CD8-positive, alpha-beta T cell (primary cell): ENCODE measurements at regions of chr22 and their contacts with region 1.

Region 1: DNA sequence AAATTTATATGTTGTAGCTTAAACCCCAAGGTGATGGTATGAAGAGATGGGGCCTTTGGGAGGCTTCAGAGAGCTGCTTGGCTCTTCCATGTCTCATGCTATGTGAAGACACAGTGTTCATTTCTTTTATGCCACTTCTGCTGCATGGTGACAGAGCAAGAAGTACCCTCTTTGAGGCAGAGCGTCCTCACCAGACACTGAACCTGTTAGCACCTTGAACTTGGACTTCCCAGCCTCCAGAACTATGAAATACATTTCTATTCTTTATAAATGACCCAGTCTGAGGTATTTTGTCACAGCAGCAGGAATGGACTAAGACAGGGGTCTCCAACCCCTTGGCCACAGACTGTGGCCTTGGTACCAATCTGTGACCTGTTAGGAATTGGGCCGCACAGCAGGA is 146.4 kb upstream of the TIMP3 start:
- DNase-seq: no peak
- ATAC-seq: no peak
- H3K4me3 ChIP-seq: no peak overlapping the region
- H3K4me3 Mint-ChIP-seq: no peak overlapping the region
- H3K27ac ChIP-seq: no peak overlapping the region
- H3K27ac Mint-ChIP-seq: no peak overlapping the region
- H3K4me1 ChIP-seq: no peaks in the 10 kb centered on the region
- H3K4me1 Mint-ChIP-seq: no peaks in the 10 kb centered on the region
- H3K27me3 ChIP-seq: no peaks in the 10 kb centered on the region
- H3K27me3 Mint-ChIP-seq: peaks cover 6% of the 10 kb centered on the region
- CTCF ChIP-seq: no peak

Region 2: GRCh38 chr22:32596471-32596870 is 58.6 kb before region 1 on chr22:
- CTCF ChIA-PET with region 1: no interaction called
- POLR2A ChIA-PET with region 1: no interaction called
- intact Hi-C with region 1: no loop called
- DNase-seq: no peak
- ATAC-seq: no peak
- H3K4me3 ChIP-seq: no peak overlapping the region
- H3K4me3 Mint-ChIP-seq: no peak overlapping the region
- H3K27ac ChIP-seq: no peak overlapping the region
- H3K27ac Mint-ChIP-seq: no peak overlapping the region
- H3K4me1 ChIP-seq: no peaks in the 10 kb centered on the region
- H3K4me1 Mint-ChIP-seq: no peaks in the 10 kb centered on the region
- H3K27me3 ChIP-seq: no peaks in the 10 kb centered on the region
- H3K27me3 Mint-ChIP-seq: no peaks in the 10 kb centered on the region
- CTCF ChIP-seq: no peak

Region 3: DNA sequence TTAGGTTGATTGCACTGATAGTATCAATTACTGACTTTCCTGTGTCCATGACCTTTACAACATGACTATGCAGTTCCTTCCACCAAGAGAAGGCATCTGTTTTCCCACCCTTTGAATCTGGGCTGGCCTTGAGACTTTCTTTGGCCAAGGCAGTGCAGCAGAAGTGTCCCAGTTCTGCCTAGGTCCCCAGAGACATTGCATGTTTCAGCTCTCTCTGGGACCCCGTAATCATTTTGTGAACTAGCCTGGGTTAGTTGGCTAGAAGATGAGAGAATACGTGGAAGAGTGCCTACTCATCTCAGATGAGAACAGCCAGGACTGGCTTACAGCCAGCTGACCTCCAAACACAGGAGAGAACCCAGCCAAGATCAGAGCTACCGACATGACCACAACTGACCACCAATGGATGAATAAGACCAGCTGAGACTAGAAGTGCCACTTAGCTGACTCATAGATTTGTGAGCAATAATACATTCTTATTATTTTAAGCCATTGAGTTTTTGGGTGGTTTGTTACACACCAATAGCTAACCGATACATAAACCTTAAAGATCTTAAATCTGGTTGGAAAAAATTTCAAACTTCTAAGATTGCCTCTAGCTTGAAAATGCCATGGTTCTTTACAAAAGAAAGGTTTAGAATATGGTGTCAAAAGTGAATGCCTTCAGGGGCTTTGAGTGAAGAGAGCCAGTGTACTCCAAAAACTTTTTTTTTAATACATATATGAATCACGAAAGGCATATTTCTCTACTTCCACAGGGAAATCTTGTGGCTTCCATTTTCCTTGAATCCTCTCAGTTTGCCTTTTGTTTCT is 35.2 kb before region 1 on chr22:
- CTCF ChIA-PET with region 1: no interaction called
- POLR2A ChIA-PET with region 1: no interaction called
- intact Hi-C with region 1: no loop called
- DNase-seq: no peak
- ATAC-seq: no peak
- H3K4me3 ChIP-seq: no peak overlapping the region
- H3K4me3 Mint-ChIP-seq: no peak overlapping the region
- H3K27ac ChIP-seq: no peak overlapping the region
- H3K27ac Mint-ChIP-seq: no peak overlapping the region
- H3K4me1 ChIP-seq: no peaks in the 10 kb centered on the region
- H3K4me1 Mint-ChIP-seq: no peaks in the 10 kb centered on the region
- H3K27me3 ChIP-seq: no peaks in the 10 kb centered on the region
- H3K27me3 Mint-ChIP-seq: no peaks in the 10 kb centered on the region
- CTCF ChIP-seq: no peak

Region 4: GRCh38 chr22:32775957-32776356 is 120.9 kb after region 1 on chr22:
- CTCF ChIA-PET with region 1: no interaction called
- POLR2A ChIA-PET with region 1: no interaction called
- intact Hi-C with region 1: no loop called
- DNase-seq: no peak
- ATAC-seq: no peak
- H3K4me3 ChIP-seq: no peak overlapping the region
- H3K4me3 Mint-ChIP-seq: no peak overlapping the region
- H3K27ac ChIP-seq: no peak overlapping the region
- H3K27ac Mint-ChIP-seq: no peak overlapping the region
- H3K4me1 ChIP-seq: no peaks in the 10 kb centered on the region
- H3K4me1 Mint-ChIP-seq: no peaks in the 10 kb centered on the region
- H3K27me3 ChIP-seq: no peaks in the 10 kb centered on the region
- H3K27me3 Mint-ChIP-seq: peaks cover 3% of the 10 kb centered on the region
- CTCF ChIP-seq: no peak

Region 5: GRCh38 chr22:32854351-32854804 is 199.3 kb after region 1 on chr22:
- CTCF ChIA-PET with region 1: no interaction called
- POLR2A ChIA-PET with region 1: no interaction called
- intact Hi-C with region 1: no loop called
- DNase-seq: no peak
- ATAC-seq: no peak
- H3K4me3 ChIP-seq: no peak overlapping the region
- H3K4me3 Mint-ChIP-seq: no peak overlapping the region
- H3K27ac ChIP-seq: no peak overlapping the region
- H3K27ac Mint-ChIP-seq: no peak overlapping the region
- H3K4me1 ChIP-seq: no peaks in the 10 kb centered on the region
- H3K4me1 Mint-ChIP-seq: no peaks in the 10 kb centered on the region
- H3K27me3 ChIP-seq: no peaks in the 10 kb centered on the region
- H3K27me3 Mint-ChIP-seq: peaks cover 7% of the 10 kb centered on the region
- CTCF ChIP-seq: no peak

Region 6: GRCh38 chr22:32985899-32986765 is 331.1 kb after region 1 on chr22:
- CTCF ChIA-PET with region 1: interaction called, 4 read pairs
- POLR2A ChIA-PET with region 1: no interaction called
- intact Hi-C with region 1: loop called in 1 of 2 experiments (anchors 5 kb)
- DNase-seq: peak in 5 of 9 experiments; percentile 11 to 49 (median 31)
- ATAC-seq: no peak
- H3K4me3 ChIP-seq: no peak overlapping the region
- H3K4me3 Mint-ChIP-seq: no peak overlapping the region
- H3K27ac ChIP-seq: no peak overlapping the region
- H3K27ac Mint-ChIP-seq: no peak overlapping the region
- H3K4me1 ChIP-seq: no peaks in the 10 kb centered on the region
- H3K4me1 Mint-ChIP-seq: no peaks in the 10 kb centered on the region
- H3K27me3 ChIP-seq: no peaks in the 10 kb centered on the region
- H3K27me3 Mint-ChIP-seq: peaks cover 3% of the 10 kb centered on the region
- CTCF ChIP-seq: peak; percentile 23